ENCODE measurements at regions of chr5 and their contacts with region 1.

Region 1: DNA sequence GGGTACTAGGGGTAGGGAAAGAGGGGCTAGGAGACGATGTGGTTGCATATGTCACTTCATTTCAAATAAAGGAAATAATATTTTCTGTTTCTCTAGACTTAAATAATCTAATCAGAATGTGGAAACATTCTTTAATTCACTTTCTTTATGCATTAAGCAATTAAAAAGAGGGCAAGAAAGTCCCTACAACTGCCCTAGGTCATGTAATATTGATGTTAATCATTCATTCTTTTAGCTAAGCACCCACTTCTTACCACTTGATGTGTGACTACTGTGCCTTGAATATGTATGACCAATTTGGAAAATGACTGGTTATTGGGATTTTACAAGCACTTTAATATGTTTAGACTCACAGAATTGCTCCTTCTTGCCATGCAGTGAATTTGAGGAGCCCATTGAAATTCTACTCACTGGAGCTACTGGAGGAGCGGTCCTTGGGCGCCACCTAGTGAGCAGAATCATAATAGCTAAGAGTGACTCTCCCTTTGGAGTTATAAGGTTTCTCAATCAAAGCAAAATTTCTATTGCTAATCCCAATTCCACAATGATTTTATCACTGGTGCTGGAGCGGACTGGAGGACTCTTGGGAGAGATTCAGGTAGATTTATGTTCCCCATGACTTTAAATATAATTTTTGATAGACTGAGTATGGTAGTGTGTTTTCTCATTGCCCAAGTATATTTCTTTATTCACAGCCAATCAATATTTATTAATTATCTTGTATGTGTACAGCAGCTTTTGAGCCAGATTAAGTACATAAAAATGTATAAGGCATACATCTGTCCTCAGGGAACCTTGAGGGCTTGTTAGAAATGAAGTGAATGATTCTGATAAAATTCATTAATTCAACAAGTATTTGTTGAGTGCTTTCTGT is 225.1 kb downstream of the ADGRV1 start:
- DNase-seq: peak; percentile 81
- H3K4me3 Mint-ChIP-seq: no peak overlapping the region
- H3K27ac Mint-ChIP-seq: no peak overlapping the region
- H3K4me1 Mint-ChIP-seq: no peaks in the 10 kb centered on the region
- H3K27me3 Mint-ChIP-seq: peaks cover 4% of the 10 kb centered on the region

Region 2: GRCh38 chr5:90264689-90265544 is 518.8 kb before region 1 on chr5:
- CTCF ChIA-PET with region 1: no interaction called
- intact Hi-C with region 1: loop called (anchors 1 kb)
- DNase-seq: peak; percentile 73
- H3K4me3 Mint-ChIP-seq: no peak overlapping the region
- H3K27ac Mint-ChIP-seq: no peak overlapping the region
- H3K4me1 Mint-ChIP-seq: peaks cover 2% of the 10 kb centered on the region
- H3K27me3 Mint-ChIP-seq: peaks cover 7% of the 10 kb centered on the region

Region 3: DNA sequence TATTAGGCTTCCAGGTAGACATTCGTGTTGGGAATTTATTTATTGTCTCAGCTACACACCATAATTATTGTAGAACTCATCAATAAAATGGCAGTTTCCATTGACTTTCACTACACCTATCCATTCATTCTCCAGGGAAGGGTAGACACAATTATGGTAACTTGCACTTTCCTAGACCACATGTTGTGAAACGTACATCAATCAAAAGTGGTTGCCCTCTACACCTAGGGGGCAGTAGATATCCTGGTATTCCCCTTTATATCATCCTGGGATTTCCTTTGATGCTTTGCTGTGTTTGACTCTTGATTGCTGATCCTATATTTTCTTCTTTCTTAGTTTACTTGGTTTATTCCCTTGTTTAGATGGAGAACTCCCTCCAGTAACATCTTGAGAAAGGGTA is 177.2 kb before region 1 on chr5:
- CTCF ChIA-PET with region 1: no interaction called
- intact Hi-C with region 1: loop called (anchors 1 kb)
- DNase-seq: no peak
- H3K4me3 Mint-ChIP-seq: no peak overlapping the region
- H3K27ac Mint-ChIP-seq: no peak overlapping the region
- H3K4me1 Mint-ChIP-seq: no peaks in the 10 kb centered on the region
- H3K27me3 Mint-ChIP-seq: peaks cover 31% of the 10 kb centered on the region

Region 4: DNA sequence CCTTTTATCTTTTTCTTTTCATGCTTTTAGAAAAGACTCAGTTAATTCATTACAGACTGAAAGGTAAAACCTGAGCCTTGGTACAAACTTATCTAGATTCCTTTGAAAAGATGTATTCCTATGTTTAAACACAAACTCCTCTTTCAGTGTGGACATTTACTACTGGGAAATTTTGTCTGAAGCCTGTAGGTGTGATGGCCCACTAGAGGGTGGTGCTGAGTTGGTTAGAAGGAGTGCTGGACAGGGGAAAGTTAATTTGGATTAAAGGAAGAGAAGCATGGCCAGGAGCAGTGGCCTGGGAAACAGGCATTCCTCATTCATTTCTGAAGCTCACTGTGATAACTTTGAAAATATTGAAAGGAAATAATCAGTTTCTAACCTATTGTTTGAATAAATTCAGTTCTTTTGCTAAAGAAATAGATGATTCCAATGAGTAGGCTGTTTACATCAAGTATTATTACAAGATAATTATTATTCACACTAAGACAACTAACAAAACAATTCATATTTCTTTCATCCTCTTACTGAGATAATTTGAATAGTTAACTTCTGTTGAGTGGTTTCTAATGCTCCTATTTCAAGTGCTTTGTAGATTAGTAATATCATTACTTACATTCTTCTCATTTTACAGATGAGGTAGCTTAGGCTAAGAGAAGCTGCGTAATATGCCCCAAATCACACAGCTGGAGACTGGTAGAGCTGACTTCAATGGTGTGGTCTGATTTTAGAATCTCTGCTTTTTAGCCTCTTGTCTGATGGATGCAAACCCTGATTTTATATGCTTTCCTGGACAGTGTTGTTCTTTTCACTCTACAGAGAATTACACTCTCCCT is 74.2 kb before region 1 on chr5:
- CTCF ChIA-PET with region 1: interaction called, 5 read pairs
- intact Hi-C with region 1: loop called (anchors 1 kb)
- DNase-seq: peak; percentile 14
- H3K4me3 Mint-ChIP-seq: no peak overlapping the region
- H3K27ac Mint-ChIP-seq: no peak overlapping the region
- H3K4me1 Mint-ChIP-seq: no peaks in the 10 kb centered on the region
- H3K27me3 Mint-ChIP-seq: no peaks in the 10 kb centered on the region

Region 5: GRCh38 chr5:91266184-91266705 is 482.5 kb after region 1 on chr5:
- CTCF ChIA-PET with region 1: no interaction called
- intact Hi-C with region 1: no loop called
- DNase-seq: no peak
- H3K4me3 Mint-ChIP-seq: no peak overlapping the region
- H3K27ac Mint-ChIP-seq: no peak overlapping the region
- H3K4me1 Mint-ChIP-seq: peaks cover 22% of the 10 kb centered on the region
- H3K27me3 Mint-ChIP-seq: no peaks in the 10 kb centered on the region